WTC11 (cell line): ENCODE measurements at regions of chr17 and their contacts with region 1.

Region 1: GRCh38 chr17:76523084-76524037 is 14.1 kb downstream of the CYGB start:
- DNase-seq: peak; percentile 88
- ATAC-seq: peak; percentile 79
- H3K4me3 Mint-ChIP-seq: peak overlapping the region; percentile 29; the same call in 1 of the 2 replicates
- H3K27ac Mint-ChIP-seq: no peak overlapping the region
- H3K4me1 Mint-ChIP-seq: peaks cover 21% of the 10 kb centered on the region
- H3K27me3 Mint-ChIP-seq: peaks cover 24% of the 10 kb centered on the region
- CTCF ChIP-seq: peak; percentile 99

Region 2: DNA sequence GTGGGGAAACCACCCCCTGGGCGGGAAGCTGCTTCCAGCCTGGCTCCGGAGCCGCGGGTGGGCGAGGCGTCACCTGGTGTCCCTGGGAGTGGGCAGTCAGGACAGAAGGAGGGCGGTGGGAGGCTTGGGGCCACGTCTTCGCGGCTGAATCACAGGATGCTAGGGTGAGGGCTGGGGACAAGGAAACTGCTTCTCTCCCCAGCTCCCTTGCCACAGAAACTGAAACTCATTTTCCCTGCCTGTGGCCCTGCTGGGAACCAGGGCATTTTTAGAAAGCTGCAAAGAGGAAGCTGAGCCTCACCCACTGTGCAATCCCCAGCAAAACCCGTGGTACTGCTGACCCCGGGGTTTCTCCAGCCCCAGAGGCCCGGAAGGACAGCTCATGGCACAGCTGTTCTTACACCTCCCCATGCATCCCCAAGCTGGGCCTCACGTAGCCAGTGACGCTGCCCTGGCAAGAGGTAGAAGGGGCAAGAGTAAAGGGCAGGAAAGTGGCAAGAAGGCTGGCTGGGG is 30.3 kb before region 1 on chr17:
- CTCF ChIA-PET with region 1: interaction called, 29 read pairs
- POLR2A ChIA-PET with region 1: no interaction called
- DNase-seq: no peak
- ATAC-seq: no peak; the same call in 1 of the 2 replicates
- H3K4me3 Mint-ChIP-seq: no peak overlapping the region
- H3K27ac Mint-ChIP-seq: peak overlapping the region; percentile 78; the same call in 1 of the 2 replicates
- H3K4me1 Mint-ChIP-seq: peaks cover 25% of the 10 kb centered on the region
- H3K27me3 Mint-ChIP-seq: no peaks in the 10 kb centered on the region
- CTCF ChIP-seq: no peak

Region 3: DNA sequence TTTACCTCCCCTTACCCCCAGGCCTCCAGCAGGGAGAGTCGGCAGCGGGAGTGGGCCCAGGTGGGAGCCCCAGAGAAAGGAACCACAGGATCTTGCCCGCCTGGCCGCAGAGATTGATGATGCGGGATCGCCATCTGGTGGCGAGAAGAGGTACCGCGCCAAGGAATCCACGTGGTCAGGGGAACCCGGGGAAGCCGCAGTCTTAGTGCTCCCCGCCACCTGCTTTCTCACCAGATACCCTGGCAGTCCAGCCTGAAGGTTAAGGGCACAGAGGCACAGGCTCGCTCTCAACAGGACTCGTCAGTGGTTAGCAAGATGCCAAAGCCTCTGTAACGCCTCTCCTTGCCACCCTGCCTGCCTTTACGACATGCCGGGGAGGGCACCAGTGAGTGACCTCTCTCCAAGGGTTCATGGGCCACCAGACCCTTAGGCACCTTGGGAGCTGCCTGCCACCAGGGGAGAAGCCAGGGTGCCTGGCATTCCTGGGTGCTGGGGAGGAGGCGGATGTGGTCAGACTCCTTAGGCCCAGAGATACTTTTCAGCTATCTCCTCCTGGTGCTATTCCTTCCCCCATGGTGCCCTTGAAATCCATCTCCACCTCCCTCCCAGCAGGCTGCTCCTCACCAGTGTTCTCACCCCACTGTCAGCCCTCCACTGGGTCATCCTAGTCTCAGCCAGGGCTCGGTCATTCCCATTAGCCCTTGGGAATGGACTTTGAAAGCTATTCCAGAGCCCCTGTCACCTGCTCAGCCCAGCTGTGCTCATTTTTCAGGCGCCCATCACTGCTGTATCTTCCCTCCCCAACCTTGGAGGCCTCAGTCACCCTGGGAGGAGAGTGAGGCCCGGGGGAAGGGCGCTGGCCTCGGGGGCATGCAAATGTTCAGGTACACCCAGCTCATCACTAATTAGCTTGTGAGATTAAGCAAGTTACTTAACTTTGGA is 16.7 kb before region 1 on chr17:
- CTCF ChIA-PET with region 1: interaction called, 40 read pairs
- POLR2A ChIA-PET with region 1: no interaction called
- DNase-seq: peak; percentile 94
- ATAC-seq: peak; percentile 80
- H3K4me3 Mint-ChIP-seq: peak overlapping the region; percentile 25
- H3K27ac Mint-ChIP-seq: no peak overlapping the region
- H3K4me1 Mint-ChIP-seq: peaks cover 12% of the 10 kb centered on the region
- H3K27me3 Mint-ChIP-seq: peaks cover 21% of the 10 kb centered on the region
- CTCF ChIP-seq: peak; percentile 92

Region 4: DNA sequence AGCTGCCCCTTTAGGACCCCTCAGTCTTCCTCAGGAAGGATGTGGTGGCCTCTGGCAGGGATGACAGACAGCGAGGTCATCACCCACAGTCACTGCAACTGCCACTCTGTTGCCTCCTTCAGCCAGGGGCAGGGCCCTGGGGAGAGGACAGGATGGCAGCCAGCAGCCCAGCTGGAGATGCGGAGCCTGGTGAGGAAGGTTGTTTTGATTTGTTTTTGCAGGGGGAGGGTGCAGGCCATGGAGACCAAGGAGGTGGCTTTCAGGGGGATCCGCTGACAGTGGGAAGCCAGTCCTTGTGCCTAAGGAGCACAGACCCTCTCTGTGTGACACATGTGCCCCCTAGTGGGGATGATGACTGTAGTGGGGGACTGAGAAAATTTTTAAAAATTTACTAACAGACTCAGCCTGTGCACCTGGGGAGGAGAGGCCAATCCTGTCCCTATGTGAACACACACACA is 23.9 kb after region 1 on chr17:
- CTCF ChIA-PET with region 1: interaction called, 81 read pairs
- POLR2A ChIA-PET with region 1: no interaction called
- DNase-seq: peak; percentile 67
- ATAC-seq: peak; percentile 76
- H3K4me3 Mint-ChIP-seq: no peak overlapping the region
- H3K27ac Mint-ChIP-seq: no peak overlapping the region
- H3K4me1 Mint-ChIP-seq: peaks cover 22% of the 10 kb centered on the region
- H3K27me3 Mint-ChIP-seq: peaks cover under 1% of the 10 kb centered on the region; the same call in 1 of the 2 replicates
- CTCF ChIP-seq: peak; percentile 48

Region 5: DNA sequence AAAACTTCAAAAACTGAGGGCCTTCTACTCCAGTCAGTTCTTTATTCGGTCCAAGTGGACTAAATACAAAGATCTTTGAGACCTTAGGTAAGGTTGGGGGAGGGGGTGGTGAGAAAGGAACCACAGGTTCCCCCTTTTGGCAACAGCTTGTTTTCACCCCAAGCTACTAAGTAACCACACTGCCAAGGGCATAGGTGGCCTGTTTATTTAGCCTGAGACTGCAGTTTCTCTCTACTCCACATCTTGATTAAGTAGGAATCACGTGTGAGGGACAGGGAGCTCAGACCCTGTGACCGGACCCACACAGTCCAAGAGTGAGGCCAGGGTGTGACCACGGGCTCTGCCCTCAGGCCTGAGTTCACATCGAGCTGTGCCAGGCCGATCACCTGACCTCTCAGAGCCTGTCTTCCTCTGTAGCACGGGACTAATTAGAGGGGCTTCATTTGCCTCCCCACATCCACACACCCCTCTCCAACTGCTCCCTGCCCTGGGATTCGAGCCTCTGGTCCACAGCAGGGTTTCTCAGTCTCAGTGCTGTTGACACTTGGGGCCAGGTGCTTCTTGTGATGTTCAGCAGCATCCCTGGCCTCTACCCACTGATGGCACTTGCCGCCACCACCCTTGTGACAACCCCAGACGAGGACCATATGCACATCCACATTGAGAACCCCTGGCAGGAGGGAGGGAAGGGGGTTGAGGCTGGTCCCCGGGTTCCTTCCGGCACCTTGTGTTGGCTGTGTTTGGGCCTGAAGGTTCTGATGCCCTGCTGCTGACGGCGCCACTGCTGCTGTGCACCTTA is 44.5 kb after region 1 on chr17:
- CTCF ChIA-PET with region 1: interaction called, 11 read pairs
- POLR2A ChIA-PET with region 1: no interaction called
- DNase-seq: no peak
- ATAC-seq: peak; percentile 23
- H3K4me3 Mint-ChIP-seq: no peak overlapping the region
- H3K27ac Mint-ChIP-seq: peak overlapping the region; percentile 84
- H3K4me1 Mint-ChIP-seq: peaks cover 38% of the 10 kb centered on the region
- H3K27me3 Mint-ChIP-seq: no peaks in the 10 kb centered on the region
- CTCF ChIP-seq: no peak

Region 6: GRCh38 chr17:76612977-76613851 is 89.9 kb after region 1 on chr17:
- CTCF ChIA-PET with region 1: interaction called, 10 read pairs
- POLR2A ChIA-PET with region 1: no interaction called
- DNase-seq: peak; percentile 54
- ATAC-seq: peak; percentile 99
- H3K4me3 Mint-ChIP-seq: no peak overlapping the region
- H3K27ac Mint-ChIP-seq: peak overlapping the region; percentile 3; the same call in 1 of the 2 replicates
- H3K4me1 Mint-ChIP-seq: 0 out of 2 replicates have a peak, but pooled peaks cover 4% of the 10 kb centered on the region
- H3K27me3 Mint-ChIP-seq: peaks cover 21% of the 10 kb centered on the region
- CTCF ChIP-seq: no peak

Region 7: GRCh38 chr17:76709077-76709950 is 186.0 kb after region 1 on chr17:
- CTCF ChIA-PET with region 1: interaction called, 15 read pairs
- POLR2A ChIA-PET with region 1: no interaction called
- DNase-seq: no peak
- ATAC-seq: no peak
- H3K4me3 Mint-ChIP-seq: peak overlapping the region; percentile 74
- H3K27ac Mint-ChIP-seq: no peak overlapping the region
- H3K4me1 Mint-ChIP-seq: peaks cover 34% of the 10 kb centered on the region
- H3K27me3 Mint-ChIP-seq: peaks cover 15% of the 10 kb centered on the region
- CTCF ChIP-seq: no peak